K562 (cell line): ENCODE measurements at regions of chr10 and their contacts with region 1.

Region 1: DNA sequence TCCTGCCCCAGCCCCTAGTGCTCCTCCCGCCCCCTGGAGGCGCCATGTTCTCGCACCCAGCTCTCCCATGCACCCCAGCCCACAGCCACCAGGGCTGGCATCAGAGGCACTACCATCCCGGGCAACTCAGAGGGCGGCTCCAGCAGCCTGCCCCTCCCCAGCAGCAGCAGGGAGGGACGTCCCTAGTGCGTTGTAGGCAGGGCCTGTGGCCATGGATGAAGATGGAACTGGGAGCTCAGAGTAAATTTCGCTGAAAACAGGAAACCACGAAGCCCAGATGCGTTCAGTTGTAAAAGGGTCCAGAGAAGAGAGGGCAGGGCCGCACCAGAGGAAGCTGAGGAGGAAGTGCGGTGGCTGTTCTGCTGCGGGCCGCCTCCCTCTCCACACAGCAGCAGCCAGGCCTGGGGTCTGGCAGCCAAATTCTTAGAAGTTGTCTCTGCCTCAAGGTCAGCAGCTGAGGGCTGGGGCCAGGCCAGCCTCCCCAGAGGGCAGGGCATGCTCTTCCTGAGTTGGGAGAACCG is 24.6 kb downstream of the VSIR start:
- DNase-seq: peak; percentile 33 to 55 (median 42)
- ATAC-seq: no peak; the same call in 2 of the 3 replicates
- H3K4me3 ChIP-seq: no peak overlapping the region
- H3K27ac ChIP-seq: peak overlapping the region; percentile 64; the same call in 1 of the 3 replicates
- H3K4me1 ChIP-seq: peaks cover 68 to 82% of the 10 kb centered on the region in 2 experiments
- H3K27me3 ChIP-seq: no peaks in the 10 kb centered on the region
- CTCF ChIP-seq: no peak
- EP300 ChIP-seq: peak; percentile 16; the same call in 1 of the 2 replicates
- POLR2A ChIP-seq: no peak
- RAD21 ChIP-seq: peak in 1 of 2 experiments; percentile 19; a peak in 1 of 4 replicates

Region 2: DNA sequence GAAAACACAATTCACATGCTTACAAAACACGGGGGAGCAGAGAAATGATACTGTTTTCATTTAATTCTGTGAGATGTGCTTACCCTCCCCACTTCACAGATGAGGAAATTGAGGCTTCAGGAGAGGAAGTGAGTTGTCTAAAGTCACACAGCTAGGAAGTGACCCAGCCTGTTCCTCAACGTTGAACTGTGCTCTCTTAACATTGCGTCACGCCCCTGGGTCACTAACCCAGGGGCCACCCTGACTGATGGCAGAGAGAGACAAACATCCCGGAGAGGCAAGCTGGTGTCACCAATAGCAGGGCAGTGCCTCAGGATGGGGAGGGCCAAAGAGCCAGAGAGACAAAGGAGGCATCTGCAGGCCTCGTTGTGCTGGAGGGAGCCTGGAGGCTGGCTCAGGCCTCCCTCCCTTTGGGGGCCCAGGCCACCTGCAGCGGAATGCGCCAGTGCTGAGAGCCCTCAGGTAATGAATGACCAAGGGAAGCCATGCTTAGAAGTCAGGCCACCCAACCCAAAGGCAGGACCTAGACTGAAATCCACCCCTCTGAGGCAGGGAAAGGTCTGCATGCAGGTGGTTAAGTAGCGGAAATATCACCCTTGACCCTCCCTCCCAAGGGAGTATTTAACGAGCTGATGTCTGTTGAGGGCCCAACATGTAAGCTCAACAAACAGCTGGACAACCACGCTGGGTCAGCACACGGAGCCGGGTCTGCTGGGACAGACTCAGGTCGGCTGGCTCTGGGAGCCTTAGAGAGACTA is 110.5 kb before region 1 on chr10:
- CTCF ChIA-PET with region 1: no interaction called
- POLR2A ChIA-PET with region 1: no interaction called
- in situ Hi-C with region 1: no loop called
- intact Hi-C with region 1: loop called (anchors 5 kb)
- DNase-seq: peak; percentile 67 to 94 (median 82)
- ATAC-seq: peak; percentile 75
- H3K4me3 ChIP-seq: no peak overlapping the region; the same call in 1 of the 2 replicates
- H3K27ac ChIP-seq: peak overlapping the region; percentile 80
- H3K4me1 ChIP-seq: peaks cover 69 to 91% of the 10 kb centered on the region in 2 experiments
- H3K27me3 ChIP-seq: no peaks in the 10 kb centered on the region; a peak in 1 of 5 replicates
- CTCF ChIP-seq: no peak
- EP300 ChIP-seq: peak; percentile 62
- POLR2A ChIP-seq: peak; percentile 76
- RAD21 ChIP-seq: no peak

Region 3: GRCh38 chr10:71713135-71714030 is 35.3 kb before region 1 on chr10:
- CTCF ChIA-PET with region 1: no interaction called
- POLR2A ChIA-PET with region 1: no interaction called
- in situ Hi-C with region 1: no loop called
- intact Hi-C with region 1: loop called (anchors 1 kb)
- DNase-seq: peak in 3 of 4 experiments; percentile 44 to 64 (median 63)
- ATAC-seq: peak; percentile 58
- H3K4me3 ChIP-seq: no peak overlapping the region
- H3K27ac ChIP-seq: peak overlapping the region; percentile 73
- H3K4me1 ChIP-seq: peaks cover 24 to 53% of the 10 kb centered on the region in 2 experiments
- H3K27me3 ChIP-seq: no peaks in the 10 kb centered on the region
- CTCF ChIP-seq: peak in 1 of 3 experiments; percentile 11; a peak in 1 of 6 replicates
- EP300 ChIP-seq: no peak
- POLR2A ChIP-seq: no peak
- RAD21 ChIP-seq: peak in 1 of 2 experiments; percentile 19; a peak in 1 of 4 replicates

Region 4: GRCh38 chr10:71727738-71728737 is 20.7 kb before region 1 on chr10:
- CTCF ChIA-PET with region 1: no interaction called
- POLR2A ChIA-PET with region 1: interaction called, 6 read pairs
- in situ Hi-C with region 1: no loop called
- intact Hi-C with region 1: loop called (anchors 2 kb)
- DNase-seq: peak in 2 of 4 experiments; percentile 42 to 63
- ATAC-seq: peak; percentile 48
- H3K4me3 ChIP-seq: no peak overlapping the region
- H3K27ac ChIP-seq: peak overlapping the region; percentile 37; the same call in 1 of the 3 replicates
- H3K4me1 ChIP-seq: peaks cover 31 to 64% of the 10 kb centered on the region in 2 experiments
- H3K27me3 ChIP-seq: no peaks in the 10 kb centered on the region; a peak in 1 of 5 replicates
- CTCF ChIP-seq: no peak
- EP300 ChIP-seq: no peak
- POLR2A ChIP-seq: no peak
- RAD21 ChIP-seq: no peak